ENCODE measurements at regions of chr3 and their contacts with region 1.

Region 1: DNA sequence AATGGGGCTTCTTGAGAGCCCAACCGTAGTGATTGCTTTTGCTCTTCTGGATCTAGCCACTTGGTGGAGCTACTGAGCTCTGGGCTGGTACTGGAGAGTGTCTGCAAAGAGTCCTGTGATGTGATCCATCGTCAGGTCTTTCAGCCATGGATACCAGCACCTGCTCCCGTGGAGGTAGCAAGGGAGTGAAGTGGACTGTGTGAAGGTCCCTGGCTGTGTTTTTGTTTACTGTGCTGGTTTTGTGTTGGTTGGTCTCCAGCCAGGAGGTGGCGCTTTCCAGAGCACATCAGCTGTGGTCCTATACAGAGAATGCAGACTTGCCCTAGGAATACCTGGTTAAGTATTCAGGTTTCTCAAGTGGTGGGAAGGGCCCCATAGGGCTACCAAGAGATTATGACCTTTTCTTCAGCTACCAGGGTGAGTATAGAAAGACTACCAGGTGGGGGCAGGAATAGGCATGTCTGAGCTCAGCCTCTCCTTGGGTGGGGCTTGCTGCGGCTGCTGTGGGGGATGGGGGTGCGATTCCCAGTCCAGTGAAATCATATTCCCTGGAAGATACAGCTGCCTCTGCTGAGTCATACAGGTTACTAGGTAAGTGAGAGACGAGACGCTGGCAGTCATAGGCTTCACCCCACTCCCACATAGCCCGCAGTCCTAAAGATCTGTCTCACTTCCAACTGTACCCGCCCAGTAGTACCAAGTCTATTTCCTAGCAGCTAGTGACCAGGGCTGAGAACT is 733.7 kb downstream of the ZNF385D start:
- DNase-seq: no peak
- H3K4me3 Mint-ChIP-seq: no peak overlapping the region
- H3K27ac Mint-ChIP-seq: no peak overlapping the region
- H3K4me1 Mint-ChIP-seq: no peaks in the 10 kb centered on the region
- H3K27me3 Mint-ChIP-seq: no peaks in the 10 kb centered on the region

Region 2: GRCh38 chr3:20974396-20974795 is 42.9 kb before region 1 on chr3:
- intact Hi-C with region 1: no loop called
- DNase-seq: no peak
- H3K4me3 Mint-ChIP-seq: no peak overlapping the region
- H3K27ac Mint-ChIP-seq: no peak overlapping the region
- H3K4me1 Mint-ChIP-seq: no peaks in the 10 kb centered on the region
- H3K27me3 Mint-ChIP-seq: no peaks in the 10 kb centered on the region

Region 3: DNA sequence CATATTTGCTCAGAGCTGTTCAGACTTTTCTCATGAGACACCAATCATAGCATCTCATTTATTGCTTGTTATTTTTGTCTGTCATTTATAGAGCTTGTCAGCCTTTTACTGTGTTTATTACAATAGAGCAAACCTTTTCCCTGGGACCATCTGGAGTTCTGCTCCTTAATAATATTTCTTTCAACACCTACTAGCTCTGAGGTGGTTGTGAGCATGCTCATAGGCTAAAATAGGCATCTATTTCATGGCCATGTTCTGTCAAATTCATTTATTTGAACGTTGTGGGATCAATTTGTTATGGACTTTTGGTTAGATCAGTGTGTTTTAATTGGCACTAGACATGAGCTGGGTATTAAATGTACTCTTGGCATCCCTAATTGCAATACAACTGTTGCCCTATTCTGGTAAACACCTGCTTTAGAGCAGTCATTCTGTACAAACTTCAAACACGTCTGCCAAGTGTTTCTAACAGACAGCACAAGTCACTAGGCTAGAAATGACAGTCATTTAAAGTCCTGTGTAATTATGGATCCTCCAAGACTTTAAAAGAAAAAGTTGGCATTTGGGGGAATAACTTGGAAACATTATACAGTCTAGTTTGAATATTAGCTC is 32.6 kb before region 1 on chr3:
- intact Hi-C with region 1: no loop called
- DNase-seq: no peak
- H3K4me3 Mint-ChIP-seq: no peak overlapping the region
- H3K27ac Mint-ChIP-seq: no peak overlapping the region
- H3K4me1 Mint-ChIP-seq: no peaks in the 10 kb centered on the region
- H3K27me3 Mint-ChIP-seq: no peaks in the 10 kb centered on the region

Region 4: GRCh38 chr3:21028412-21028811 is 11.1 kb after region 1 on chr3:
- intact Hi-C with region 1: loop called (anchors 1 kb)
- DNase-seq: no peak
- H3K4me3 Mint-ChIP-seq: no peak overlapping the region
- H3K27ac Mint-ChIP-seq: no peak overlapping the region
- H3K4me1 Mint-ChIP-seq: no peaks in the 10 kb centered on the region
- H3K27me3 Mint-ChIP-seq: no peaks in the 10 kb centered on the region

Measured in activated T-helper 1 cell treated with anti-CD3 and anti-CD28 coated beads, Interleukin-12 subunit alpha, Interleukin-12 subunit beta, Interleukin-2, Interleukin-4 antibody, amounts not matched to agents 30 ng/mL and 10 ng/mL and 1 ng/mL, durations not matched to agents 14 hours and 24 hours and 36 hours (primary cell).